ENCODE measurements at regions of chr19 and their contacts with region 1.

Region 1: DNA sequence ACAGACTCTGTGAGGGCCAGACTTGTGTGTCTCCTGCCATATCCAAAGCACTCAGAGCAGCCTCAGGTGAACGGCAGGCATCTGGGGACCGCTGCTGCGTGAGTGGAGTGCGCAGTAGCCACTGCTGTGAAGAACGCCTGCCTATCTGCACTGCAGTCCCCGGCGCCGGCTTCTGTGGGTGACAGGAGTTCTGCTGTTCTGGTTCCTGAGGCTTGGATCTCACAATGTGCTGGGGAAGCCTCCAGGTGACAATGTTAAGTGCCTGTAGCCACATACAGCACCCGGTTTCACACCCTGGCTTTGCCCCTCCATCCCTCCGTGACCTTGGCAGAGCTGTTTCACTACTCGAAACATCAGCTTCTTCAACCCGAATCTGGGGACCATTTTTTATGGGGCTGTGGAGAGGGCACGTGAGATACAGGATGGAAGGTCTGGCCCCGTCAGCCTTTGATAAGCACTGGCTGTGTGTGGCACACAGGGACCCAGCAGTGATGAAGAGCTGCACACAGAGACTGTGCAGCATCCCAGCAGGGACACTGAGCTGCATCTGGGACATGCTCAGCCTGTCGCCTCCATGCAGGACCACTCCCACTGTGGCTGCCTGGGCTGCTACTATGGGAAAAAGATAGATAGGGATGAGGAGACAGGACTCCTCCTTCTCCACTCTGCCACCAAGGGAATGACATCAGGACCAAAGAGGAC is 28.3 kb downstream of the ELAVL1 start:
- DNase-seq: no peak
- H3K4me3 ChIP-seq: no peak overlapping the region
- H3K27ac ChIP-seq: no peak overlapping the region
- H3K4me1 ChIP-seq: no peaks in the 10 kb centered on the region
- H3K27me3 ChIP-seq: no peaks in the 10 kb centered on the region
- CTCF ChIP-seq: no peak

Region 2: GRCh38 chr19:8017808-8018207 is 40.6 kb after region 1 on chr19:
- CTCF ChIA-PET with region 1: interaction called, 10 read pairs
- POLR2A ChIA-PET with region 1: no interaction called
- intact Hi-C with region 1: no loop called
- DNase-seq: peak; percentile 39
- H3K4me3 ChIP-seq: no peak overlapping the region
- H3K27ac ChIP-seq: no peak overlapping the region
- H3K4me1 ChIP-seq: no peaks in the 10 kb centered on the region
- H3K27me3 ChIP-seq: no peaks in the 10 kb centered on the region
- CTCF ChIP-seq: peak; percentile 58

Region 3: GRCh38 chr19:8167985-8168384 is 190.8 kb after region 1 on chr19:
- CTCF ChIA-PET with region 1: no interaction called
- POLR2A ChIA-PET with region 1: no interaction called
- intact Hi-C with region 1: no loop called
- DNase-seq: no peak
- H3K4me3 ChIP-seq: no peak overlapping the region
- H3K27ac ChIP-seq: no peak overlapping the region
- H3K4me1 ChIP-seq: no peaks in the 10 kb centered on the region
- H3K27me3 ChIP-seq: no peaks in the 10 kb centered on the region
- CTCF ChIP-seq: no peak